Heart right ventricle (tissue), 16 donors: ENCODE measurements at regions of chr4 and their contacts with region 1.

Region 1: GRCh38 chr4:87848622-87849351 is 16.0 kb downstream of the MEPE start:
- DNase-seq: peak in 1 of 2 donors; percentile 56
- ATAC-seq: peak; percentile 72 to 92 (median 82)
- H3K4me3 ChIP-seq: peak overlapping the region in 8 of 10 donors; percentile 4 to 41 (median 30)
- H3K27ac ChIP-seq: peak overlapping the region in 2 of 10 donors; percentile 46 to 83
- H3K4me1 ChIP-seq: peaks cover 0 to 55% (median 8%) of the 10 kb centered on the region in 9 donors
- H3K27me3 ChIP-seq: no peaks in the 10 kb centered on the region
- CTCF ChIP-seq: peak; percentile 48 to 77 (median 67)

Region 2: DNA sequence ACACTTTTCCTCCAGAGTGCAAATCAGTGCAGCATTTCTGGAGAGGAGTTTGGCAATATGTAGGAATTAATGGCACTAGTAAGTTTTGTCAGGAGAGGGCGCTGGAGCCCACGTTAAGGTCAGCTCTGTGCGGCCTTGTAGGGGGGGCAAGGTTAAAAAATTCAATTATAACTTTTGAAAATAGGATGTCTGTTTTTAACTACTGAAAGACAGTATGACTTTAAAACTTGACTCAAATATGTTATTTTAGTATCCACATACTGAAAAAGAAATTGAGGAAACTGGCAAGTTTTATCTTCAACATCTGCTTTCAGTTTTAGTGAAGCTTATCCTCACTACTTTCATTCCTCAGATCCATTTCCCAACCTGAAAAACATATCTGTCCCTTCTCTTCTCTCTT is 495.2 kb before region 1 on chr4:
- intact Hi-C with region 1: loop called in 1 of 10 experiments (anchors 5 kb)
- DNase-seq: peak; percentile 27 to 63
- ATAC-seq: peak in 6 of 8 donors; percentile 61 to 93 (median 76)
- H3K4me3 ChIP-seq: no peak overlapping the region
- H3K27ac ChIP-seq: peak overlapping the region in 7 of 10 donors; percentile 14 to 75 (median 47)
- H3K4me1 ChIP-seq: peaks cover 0 to 19% (median 6%) of the 10 kb centered on the region in 9 donors
- H3K27me3 ChIP-seq: no peaks in the 10 kb centered on the region
- CTCF ChIP-seq: peak; percentile 46 to 82 (median 66)

Region 3: GRCh38 chr4:87375719-87376291 is 473.0 kb before region 1 on chr4:
- intact Hi-C with region 1: loop called in 5 of 10 experiments (anchors 5 to 10 kb)
- DNase-seq: peak in 1 of 2 donors; percentile 30
- ATAC-seq: peak in 7 of 8 donors; percentile 58 to 83 (median 69)
- H3K4me3 ChIP-seq: no peak overlapping the region
- H3K27ac ChIP-seq: peak overlapping the region in 2 of 10 donors; percentile 12 to 31
- H3K4me1 ChIP-seq: peaks cover 0 to 12% (median 4%) of the 10 kb centered on the region in 9 donors
- H3K27me3 ChIP-seq: no peaks in the 10 kb centered on the region
- CTCF ChIP-seq: peak; percentile 20 to 87 (median 72)

Region 4: DNA sequence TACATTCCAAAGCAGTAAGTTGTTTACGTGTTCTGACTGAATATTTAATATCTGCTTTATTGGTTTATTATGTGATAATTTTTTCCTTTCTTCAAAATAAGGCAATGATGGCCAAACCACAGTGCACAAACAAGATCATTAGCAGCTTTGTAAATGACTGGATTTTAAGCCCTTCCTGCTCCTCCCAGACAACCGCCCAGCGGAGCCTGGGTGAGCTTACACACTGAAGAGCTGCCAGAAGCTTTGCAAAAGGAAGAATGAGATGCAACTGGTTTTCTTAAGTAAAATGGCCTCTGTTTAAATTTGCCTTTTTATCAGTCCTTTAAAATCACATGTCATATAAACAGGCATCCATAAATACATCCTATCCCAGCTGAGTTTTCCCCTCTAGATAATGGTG is 371.9 kb before region 1 on chr4:
- intact Hi-C with region 1: loop called in 1 of 10 experiments (anchors 10 kb)
- DNase-seq: no peak
- ATAC-seq: peak in 2 of 8 donors; percentile 39 to 66
- H3K4me3 ChIP-seq: no peak overlapping the region
- H3K27ac ChIP-seq: peak overlapping the region in 5 of 10 donors; percentile 11 to 68 (median 19)
- H3K4me1 ChIP-seq: peaks cover 0 to 33% (median 0%) of the 10 kb centered on the region in 9 donors
- H3K27me3 ChIP-seq: no peaks in the 10 kb centered on the region
- CTCF ChIP-seq: no peak

Region 5: GRCh38 chr4:87679449-87680169 is 169.2 kb before region 1 on chr4:
- intact Hi-C with region 1: loop called in 2 of 10 experiments (anchors 1 to 5 kb)
- DNase-seq: peak; percentile 55 to 68
- ATAC-seq: peak; percentile 71 to 89 (median 83)
- H3K4me3 ChIP-seq: peak overlapping the region in 2 of 10 donors; percentile 1 to 3
- H3K27ac ChIP-seq: peak overlapping the region in 6 of 10 donors; percentile 25 to 68 (median 50)
- H3K4me1 ChIP-seq: peaks cover 0 to 31% (median 19%) of the 10 kb centered on the region in 9 donors
- H3K27me3 ChIP-seq: no peaks in the 10 kb centered on the region
- CTCF ChIP-seq: peak; percentile 74 to 87 (median 78)

Region 6: GRCh38 chr4:87732033-87732765 is 116.6 kb before region 1 on chr4:
- intact Hi-C with region 1: no loop called
- DNase-seq: no peak
- ATAC-seq: peak in 3 of 8 donors; percentile 29 to 92 (median 46)
- H3K4me3 ChIP-seq: no peak overlapping the region
- H3K27ac ChIP-seq: peak overlapping the region in 1 of 10 donors; percentile 42
- H3K4me1 ChIP-seq: peaks cover 0 to 5% (median 0%) of the 10 kb centered on the region in 9 donors
- H3K27me3 ChIP-seq: no peaks in the 10 kb centered on the region
- CTCF ChIP-seq: no peak

Region 7: GRCh38 chr4:88211473-88212252 is 362.9 kb after region 1 on chr4:
- intact Hi-C with region 1: loop called in 6 of 10 experiments (anchors 1 to 10 kb)
- DNase-seq: peak in 1 of 2 donors; percentile 56
- ATAC-seq: peak in 7 of 8 donors; percentile 38 to 77 (median 70)
- H3K4me3 ChIP-seq: no peak overlapping the region
- H3K27ac ChIP-seq: no peak overlapping the region
- H3K4me1 ChIP-seq: peaks cover 0 to 4% (median 0%) of the 10 kb centered on the region in 9 donors
- H3K27me3 ChIP-seq: no peaks in the 10 kb centered on the region
- CTCF ChIP-seq: peak; percentile 54 to 88 (median 76)